ENCODE measurements at regions of chr6 and their contacts with region 1.

Region 1: GRCh38 chr6:64280569-64280968 is 645.0 kb downstream of the PHF3 start:
- DNase-seq: peak; percentile 71
- ATAC-seq: peak; percentile 43; the same call in 1 of the 2 replicates
- H3K4me3 ChIP-seq: no peak overlapping the region
- H3K27ac ChIP-seq: no peak overlapping the region
- H3K4me1 ChIP-seq: peaks cover 4% of the 10 kb centered on the region; the same call in 1 of the 2 replicates
- H3K27me3 ChIP-seq: no peaks in the 10 kb centered on the region
- CTCF ChIP-seq: peak; percentile 76

Region 2: GRCh38 chr6:62797190-62797589 is 1483.4 kb before region 1 on chr6:
- CTCF ChIA-PET with region 1: no interaction called
- POLR2A ChIA-PET with region 1: no interaction called
- intact Hi-C with region 1: no loop called
- DNase-seq: no peak
- ATAC-seq: no peak
- H3K4me3 ChIP-seq: no peak overlapping the region
- H3K27ac ChIP-seq: no peak overlapping the region
- H3K4me1 ChIP-seq: no peaks in the 10 kb centered on the region
- H3K27me3 ChIP-seq: no peaks in the 10 kb centered on the region
- CTCF ChIP-seq: no peak

Region 3: DNA sequence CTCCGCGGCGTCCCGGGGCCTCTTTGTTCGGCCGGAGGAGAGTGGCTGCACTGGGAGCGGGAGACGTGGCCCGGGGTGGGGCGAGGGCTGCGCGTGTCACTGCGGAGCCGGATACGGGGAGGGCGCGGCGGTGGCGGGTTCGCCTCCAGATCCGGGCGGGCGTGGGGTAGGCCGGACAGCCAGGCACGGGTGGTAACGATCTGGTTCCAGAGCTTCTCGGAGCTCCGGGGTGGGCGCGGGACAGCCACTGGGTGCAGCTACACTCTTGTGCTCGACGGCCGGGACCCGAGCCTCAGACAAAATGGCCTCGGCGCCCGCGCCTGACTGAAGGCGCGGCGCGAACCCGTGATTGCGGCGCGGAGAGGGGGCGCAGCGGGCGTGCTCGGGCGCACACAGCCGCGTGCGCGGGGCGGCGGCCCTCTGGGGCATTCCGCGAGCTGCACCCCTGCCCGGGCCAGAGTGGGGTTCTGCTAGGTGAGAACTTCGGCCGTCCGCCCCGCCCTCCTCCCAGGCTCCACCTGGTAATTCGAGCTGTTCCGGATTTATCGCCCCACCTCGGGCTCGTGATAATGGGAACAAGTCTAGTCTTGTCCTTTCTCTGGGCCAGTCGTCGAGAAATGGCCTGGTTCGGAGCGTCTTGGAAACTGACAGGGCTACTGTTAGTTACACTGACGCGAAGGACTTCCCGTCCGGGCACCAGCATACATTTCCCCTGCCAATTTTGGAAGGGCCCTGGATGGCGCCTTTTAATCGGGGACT is 707.2 kb before region 1 on chr6:
- CTCF ChIA-PET with region 1: no interaction called
- POLR2A ChIA-PET with region 1: no interaction called
- intact Hi-C with region 1: no loop called
- DNase-seq: peak; percentile 68
- ATAC-seq: peak; percentile 52
- H3K4me3 ChIP-seq: peak overlapping the region; percentile 84
- H3K27ac ChIP-seq: peak overlapping the region; percentile 99
- H3K4me1 ChIP-seq: peaks cover 18% of the 10 kb centered on the region
- H3K27me3 ChIP-seq: no peaks in the 10 kb centered on the region
- CTCF ChIP-seq: no peak

Region 4: GRCh38 chr6:64330694-64331307 is 50.2 kb after region 1 on chr6:
- CTCF ChIA-PET with region 1: interaction called, 10 read pairs
- POLR2A ChIA-PET with region 1: no interaction called
- intact Hi-C with region 1: loop called (anchors 1 kb)
- DNase-seq: peak; percentile 86
- ATAC-seq: peak; percentile 80
- H3K4me3 ChIP-seq: no peak overlapping the region
- H3K27ac ChIP-seq: no peak overlapping the region
- H3K4me1 ChIP-seq: no peaks in the 10 kb centered on the region
- H3K27me3 ChIP-seq: no peaks in the 10 kb centered on the region
- CTCF ChIP-seq: peak; percentile 74

Region 5: DNA sequence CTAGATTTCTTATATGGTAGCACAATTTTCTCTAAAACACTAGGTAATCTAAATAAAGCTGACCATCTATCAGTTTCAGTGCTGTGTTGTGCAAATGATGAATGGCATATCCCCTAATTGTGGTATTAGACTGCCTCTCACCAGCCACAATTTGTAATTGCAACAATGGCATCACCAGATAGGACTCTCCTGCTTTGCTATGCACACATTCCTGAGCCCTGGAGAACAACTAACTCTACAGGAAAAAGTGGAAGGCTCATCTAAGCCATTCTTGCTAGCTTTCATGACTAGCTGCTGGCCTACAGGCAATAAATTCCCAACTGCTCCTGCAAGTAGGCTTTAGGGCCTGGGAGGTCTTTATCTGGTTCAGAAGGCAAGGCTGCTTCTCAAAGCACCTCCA is 452.3 kb after region 1 on chr6:
- CTCF ChIA-PET with region 1: no interaction called
- POLR2A ChIA-PET with region 1: no interaction called
- intact Hi-C with region 1: loop called (anchors 2 kb)
- DNase-seq: peak; percentile 53
- ATAC-seq: peak; percentile 61
- H3K4me3 ChIP-seq: no peak overlapping the region
- H3K27ac ChIP-seq: no peak overlapping the region
- H3K4me1 ChIP-seq: 0 out of 2 replicates have a peak, but pooled peaks cover 3% of the 10 kb centered on the region
- H3K27me3 ChIP-seq: no peaks in the 10 kb centered on the region
- CTCF ChIP-seq: peak; percentile 67

Measured in PC-3 (cell line).